Prostate gland (tissue), 2 donors: ENCODE measurements at regions of chr15 and their contacts with region 1.

Region 1: DNA sequence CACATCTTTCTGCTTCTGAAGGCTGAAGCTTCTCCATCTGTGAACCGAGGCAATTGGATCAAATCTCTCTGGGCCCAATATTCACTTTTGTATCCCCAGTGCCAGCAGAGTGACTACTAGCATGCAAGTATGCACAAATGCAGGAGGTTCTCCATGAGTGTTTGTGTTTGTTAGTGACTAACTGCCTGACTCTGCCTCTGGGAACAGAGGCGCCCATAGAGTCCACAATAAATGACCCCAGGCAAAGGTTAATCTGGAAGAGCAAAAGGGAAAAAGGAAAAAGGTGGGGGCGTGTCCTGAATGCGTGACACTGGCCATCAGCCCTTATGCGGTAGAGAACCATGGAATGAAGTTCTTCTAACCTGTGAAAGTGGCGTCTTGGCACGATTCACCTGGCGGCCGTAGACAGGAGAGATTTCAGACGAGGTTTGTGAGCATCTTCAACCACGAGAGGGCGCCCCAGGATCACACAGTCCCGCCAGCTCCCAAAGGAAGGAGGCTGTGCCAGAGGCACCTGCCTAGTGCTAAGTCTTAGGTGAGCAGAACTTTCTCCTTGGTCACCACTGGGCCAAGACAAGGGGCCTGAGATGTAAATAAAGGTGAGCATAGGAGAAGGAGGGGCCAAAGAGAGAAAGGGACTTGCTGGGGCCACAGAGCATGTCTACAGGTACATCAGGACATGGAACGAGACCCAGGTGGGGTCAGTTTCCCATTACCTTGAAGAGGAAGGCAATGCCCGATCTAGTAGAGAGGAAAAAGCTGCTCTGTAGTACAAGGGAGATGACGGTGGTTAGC is 44.2 kb downstream of the RBPMS2 start:
- DNase-seq: peak; percentile 89
- H3K4me3 ChIP-seq: no peak overlapping the region
- H3K27ac ChIP-seq: no peak overlapping the region
- H3K4me1 ChIP-seq: no peaks in the 10 kb centered on the region
- H3K27me3 ChIP-seq: no peaks in the 10 kb centered on the region
- CTCF ChIP-seq: peak; percentile 55 to 94 (median 90)
- POLR2A ChIP-seq: peak; percentile 5

Region 2: DNA sequence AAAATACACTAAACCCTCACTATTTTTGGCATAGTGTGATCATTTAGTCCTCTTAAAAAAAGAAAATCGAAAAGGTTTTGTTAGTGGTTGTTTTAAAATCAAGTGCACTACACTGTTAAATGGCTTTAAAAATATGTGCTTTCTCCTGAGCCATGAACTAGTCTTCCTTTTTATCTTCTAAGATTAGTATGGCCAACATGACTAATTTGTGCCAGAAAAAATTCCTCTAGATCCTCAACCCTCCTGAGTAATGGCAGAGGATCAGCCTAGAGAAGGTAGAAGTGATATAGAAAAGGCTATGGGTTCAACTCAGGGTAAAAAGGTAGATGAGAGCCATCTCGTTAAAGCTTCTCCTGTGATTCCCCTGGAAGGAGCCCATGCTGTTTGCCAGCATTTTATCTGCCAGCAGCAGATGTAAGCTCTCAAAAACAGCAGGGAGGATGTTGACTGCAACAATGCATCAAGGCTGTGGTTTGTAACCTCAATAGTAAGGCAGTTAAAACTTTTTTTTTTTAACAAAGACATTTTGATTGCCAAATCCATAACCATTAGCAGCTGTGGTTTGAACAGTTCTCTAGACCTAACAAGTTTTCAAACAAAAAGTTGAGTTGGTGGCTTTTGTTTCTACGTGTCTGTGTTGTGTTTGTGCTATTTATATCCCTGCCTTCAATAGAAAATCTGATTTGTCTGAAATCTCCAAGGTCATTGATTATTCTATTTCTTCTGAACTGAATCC is 301.0 kb before region 1 on chr15:
- intact Hi-C with region 1: loop called (anchors 2 kb)
- DNase-seq: peak; percentile 8
- H3K4me3 ChIP-seq: no peak overlapping the region
- H3K27ac ChIP-seq: peak overlapping the region in 1 of 2 donors; percentile 35
- H3K4me1 ChIP-seq: no peaks in the 10 kb centered on the region
- H3K27me3 ChIP-seq: no peaks in the 10 kb centered on the region
- CTCF ChIP-seq: no peak
- POLR2A ChIP-seq: no peak